SK-N-SH (cell line): ENCODE measurements at regions of chr10 and their contacts with region 1.

Region 1: DNA sequence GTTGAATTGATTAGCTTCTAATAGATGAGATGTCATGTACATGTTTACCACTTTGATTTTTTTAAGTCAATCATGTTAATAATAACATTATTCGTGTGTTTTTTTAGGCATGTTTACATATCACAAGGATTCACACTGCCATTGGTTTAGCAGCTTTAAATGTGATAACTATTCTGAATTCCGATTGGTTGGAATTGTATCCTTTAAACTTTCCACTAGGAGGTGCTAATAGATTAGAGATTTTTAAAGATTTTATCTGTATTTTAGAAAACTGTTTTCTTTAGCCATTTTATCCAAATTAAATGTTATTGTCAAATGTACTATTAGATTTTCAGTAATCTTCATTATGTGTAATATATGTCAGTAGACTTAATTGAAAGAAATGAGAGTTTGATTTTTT is 83.2 kb downstream of the HECTD2 start:
- DNase-seq: peak; percentile 53
- H3K4me3 ChIP-seq: no peak overlapping the region
- H3K27ac ChIP-seq: no peak overlapping the region
- H3K4me1 ChIP-seq: peaks cover 0 to 15% of the 10 kb centered on the region in 2 experiments; a peak in 2 of 4 replicates
- H3K27me3 ChIP-seq: no peaks in the 10 kb centered on the region
- CTCF ChIP-seq: peak; percentile 68
- EP300 ChIP-seq: no peak
- RAD21 ChIP-seq: peak; percentile 65

Region 2: DNA sequence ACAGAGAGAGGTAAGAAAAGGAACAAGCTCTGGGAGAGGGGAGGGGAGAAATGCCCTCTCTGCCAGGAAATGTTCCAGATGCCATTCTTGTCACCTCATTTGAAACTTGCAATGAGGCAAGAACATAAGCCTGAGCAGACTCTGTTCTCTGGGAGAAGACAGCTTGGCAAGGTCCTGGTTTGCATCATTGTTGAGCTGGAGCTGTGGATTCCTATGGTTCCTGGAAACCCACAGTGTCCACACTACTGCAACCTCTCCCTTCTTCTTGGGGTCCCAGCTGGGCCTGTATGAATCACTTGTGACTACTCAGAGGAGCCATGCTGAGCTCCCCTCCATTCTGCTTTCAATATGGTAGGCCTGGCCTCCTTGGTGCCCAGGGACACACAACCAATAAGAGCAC is 143.9 kb before region 1 on chr10:
- CTCF ChIA-PET with region 1: no interaction called
- POLR2A ChIA-PET with region 1: no interaction called
- DNase-seq: no peak
- H3K4me3 ChIP-seq: no peak overlapping the region
- H3K27ac ChIP-seq: peak overlapping the region; percentile 11 to 89; a peak in 3 of 4 replicates
- H3K4me1 ChIP-seq: peaks cover 0 to 33% of the 10 kb centered on the region in 2 experiments
- H3K27me3 ChIP-seq: no peaks in the 10 kb centered on the region
- CTCF ChIP-seq: no peak
- EP300 ChIP-seq: peak; percentile 51 to 97; a peak in 3 of 4 replicates
- RAD21 ChIP-seq: no peak

Region 3: GRCh38 chr10:91367127-91367531 is 126.2 kb before region 1 on chr10:
- CTCF ChIA-PET with region 1: no interaction called
- POLR2A ChIA-PET with region 1: no interaction called
- DNase-seq: no peak
- H3K4me3 ChIP-seq: no peak overlapping the region
- H3K27ac ChIP-seq: no peak overlapping the region
- H3K4me1 ChIP-seq: no peaks in the 10 kb centered on the region
- H3K27me3 ChIP-seq: no peaks in the 10 kb centered on the region
- CTCF ChIP-seq: no peak
- EP300 ChIP-seq: no peak
- RAD21 ChIP-seq: no peak

Region 4: DNA sequence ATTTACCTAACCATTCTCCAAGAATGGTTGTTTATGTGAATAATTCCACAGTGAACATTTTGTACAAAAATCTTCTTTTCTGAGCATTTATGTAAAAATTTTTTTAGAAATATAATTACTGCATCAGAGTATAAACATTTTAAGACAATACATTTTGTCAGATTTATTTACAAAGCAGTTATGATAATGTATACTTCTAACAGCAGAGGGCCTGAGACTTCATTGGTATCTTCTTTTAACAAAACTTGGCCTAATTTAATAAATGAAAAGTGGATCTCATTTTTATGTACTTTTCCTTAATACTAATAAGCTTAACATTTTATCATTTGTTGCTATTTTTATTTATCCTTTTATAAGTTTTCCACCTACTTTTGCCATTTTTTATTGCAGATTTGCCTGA is 13.7 kb before region 1 on chr10:
- CTCF ChIA-PET with region 1: interaction called, 24 read pairs
- POLR2A ChIA-PET with region 1: no interaction called
- DNase-seq: no peak
- H3K4me3 ChIP-seq: no peak overlapping the region
- H3K27ac ChIP-seq: no peak overlapping the region
- H3K4me1 ChIP-seq: no peaks in the 10 kb centered on the region
- H3K27me3 ChIP-seq: no peaks in the 10 kb centered on the region
- CTCF ChIP-seq: 0 out of 2 replicates have a peak, but pooled peaks have one; percentile 18
- EP300 ChIP-seq: no peak
- RAD21 ChIP-seq: no peak

Region 5: GRCh38 chr10:91536111-91536510 is 42.8 kb after region 1 on chr10:
- CTCF ChIA-PET with region 1: no interaction called
- POLR2A ChIA-PET with region 1: no interaction called
- DNase-seq: no peak
- H3K4me3 ChIP-seq: no peak overlapping the region
- H3K27ac ChIP-seq: no peak overlapping the region
- H3K4me1 ChIP-seq: peaks cover 0 to 5% of the 10 kb centered on the region in 2 experiments; a peak in 2 of 4 replicates
- H3K27me3 ChIP-seq: no peaks in the 10 kb centered on the region
- CTCF ChIP-seq: no peak
- EP300 ChIP-seq: no peak
- RAD21 ChIP-seq: no peak